Calu3 (cell line): ENCODE measurements at regions of chr18 and their contacts with region 1.

Region 1: DNA sequence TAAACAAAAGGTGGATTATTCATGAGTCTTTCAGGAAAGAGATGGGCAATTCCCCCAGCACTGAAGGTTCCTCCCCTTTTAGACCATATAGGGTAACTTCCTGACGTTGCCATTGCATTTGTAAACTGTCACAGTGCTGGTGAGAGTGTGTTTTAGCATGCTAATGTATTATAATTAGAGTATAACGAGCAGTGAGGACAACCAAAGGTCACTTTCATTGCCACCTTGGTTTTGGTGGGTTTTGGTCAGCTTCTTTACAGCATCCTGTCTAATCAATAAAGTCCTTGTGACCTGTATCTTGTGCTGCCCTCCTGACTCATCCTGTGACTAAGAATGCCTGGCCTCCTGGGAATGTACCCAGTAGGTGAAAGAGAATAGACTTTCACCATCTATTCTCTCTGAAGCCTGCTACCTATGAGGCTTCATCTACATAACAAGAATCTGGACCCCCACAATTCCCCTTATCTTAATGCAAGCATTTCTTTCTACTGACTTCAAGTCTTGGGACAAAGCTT is 148.7 kb downstream of the CABLES1 start:
- DNase-seq: peak; percentile 73
- H3K4me3 Mint-ChIP-seq: peak overlapping the region; percentile 3
- H3K27ac Mint-ChIP-seq: peak overlapping the region; percentile 89
- H3K4me1 Mint-ChIP-seq: peaks cover 71% of the 10 kb centered on the region
- H3K27me3 Mint-ChIP-seq: no peaks in the 10 kb centered on the region
- CTCF ChIP-seq: no peak

Region 2: DNA sequence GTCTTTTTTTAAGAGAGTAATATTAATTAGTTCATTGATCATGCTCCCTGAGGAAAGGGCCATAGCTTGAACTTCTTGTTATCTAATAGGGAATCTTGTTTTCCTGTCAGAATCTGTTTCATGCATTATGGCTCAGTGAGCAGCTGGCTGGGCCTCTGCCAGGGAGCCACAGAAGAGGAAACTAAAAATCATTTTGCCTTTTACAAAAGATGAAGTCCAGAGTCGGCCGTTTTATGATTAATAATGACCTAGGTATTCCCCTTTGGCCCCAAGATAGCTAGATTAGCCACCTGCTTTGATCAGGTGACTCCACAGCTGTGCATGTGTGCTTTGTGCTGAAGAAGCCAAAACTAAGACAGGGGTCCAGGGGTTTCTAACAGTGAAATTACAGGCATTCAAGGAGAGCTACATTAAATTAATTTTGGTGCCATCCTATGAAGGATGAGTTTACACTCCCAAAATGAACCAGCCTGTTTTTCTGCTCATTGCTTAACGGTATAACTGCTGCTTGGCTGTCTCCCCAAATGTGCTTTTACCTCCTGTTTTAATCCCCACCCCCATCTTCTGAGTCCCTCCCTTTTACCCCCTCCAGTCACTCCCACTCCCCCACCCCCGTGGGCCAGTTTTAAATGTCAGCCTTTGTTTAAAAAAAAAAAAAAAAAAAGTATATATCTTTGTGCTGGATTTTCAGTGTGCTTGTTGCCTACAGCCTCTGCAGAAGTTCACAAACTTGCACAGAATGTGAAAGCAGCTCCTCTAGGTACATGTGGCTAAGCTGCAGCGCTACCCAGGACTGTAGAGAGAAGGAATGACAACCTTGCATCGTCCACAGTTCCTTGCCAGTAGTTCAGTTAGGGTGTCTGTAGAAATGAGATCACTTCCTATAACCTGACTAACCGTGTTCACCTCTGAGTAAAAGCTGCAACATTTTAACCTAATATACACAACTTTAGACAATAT is 55.6 kb before region 1 on chr18:
- CTCF ChIA-PET with region 1: interaction called, 5 read pairs
- intact Hi-C with region 1: loop called (anchors 10 kb)
- DNase-seq: no peak
- H3K4me3 Mint-ChIP-seq: peak overlapping the region; percentile 22
- H3K27ac Mint-ChIP-seq: peak overlapping the region; percentile 86
- H3K4me1 Mint-ChIP-seq: peaks cover 65% of the 10 kb centered on the region
- H3K27me3 Mint-ChIP-seq: no peaks in the 10 kb centered on the region
- CTCF ChIP-seq: no peak

Region 3: GRCh38 chr18:23307567-23308295 is 23.8 kb after region 1 on chr18:
- CTCF ChIA-PET with region 1: no interaction called
- intact Hi-C with region 1: no loop called
- DNase-seq: no peak
- H3K4me3 Mint-ChIP-seq: no peak overlapping the region
- H3K27ac Mint-ChIP-seq: no peak overlapping the region
- H3K4me1 Mint-ChIP-seq: peaks cover 17% of the 10 kb centered on the region
- H3K27me3 Mint-ChIP-seq: no peaks in the 10 kb centered on the region
- CTCF ChIP-seq: no peak

Region 4: DNA sequence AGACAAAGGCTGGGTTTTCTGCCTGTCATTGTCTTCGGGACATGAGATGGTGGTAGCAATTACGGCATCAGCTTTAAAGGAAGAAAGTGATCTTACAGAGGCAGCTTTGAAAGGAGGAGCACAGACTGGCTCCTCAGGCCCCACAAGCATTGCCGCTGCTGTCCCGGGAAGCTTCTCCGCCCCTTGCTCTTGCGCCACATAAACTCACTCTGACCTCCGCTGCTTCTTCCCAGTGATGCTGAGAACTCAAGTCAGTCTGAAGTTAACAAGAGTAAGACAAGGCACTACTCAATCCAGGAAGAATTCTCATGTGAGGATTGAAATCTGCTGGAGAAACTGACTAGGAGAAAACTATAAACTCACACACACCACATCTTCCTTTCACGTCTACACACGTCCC is 56.7 kb after region 1 on chr18:
- CTCF ChIA-PET with region 1: no interaction called
- intact Hi-C with region 1: no loop called
- DNase-seq: no peak
- H3K4me3 Mint-ChIP-seq: no peak overlapping the region
- H3K27ac Mint-ChIP-seq: no peak overlapping the region
- H3K4me1 Mint-ChIP-seq: no peaks in the 10 kb centered on the region
- H3K27me3 Mint-ChIP-seq: no peaks in the 10 kb centered on the region
- CTCF ChIP-seq: no peak

Region 5: GRCh38 chr18:23391156-23391555 is 107.2 kb after region 1 on chr18:
- CTCF ChIA-PET with region 1: no interaction called
- intact Hi-C with region 1: no loop called
- DNase-seq: no peak
- H3K4me3 Mint-ChIP-seq: no peak overlapping the region
- H3K27ac Mint-ChIP-seq: no peak overlapping the region
- H3K4me1 Mint-ChIP-seq: peaks cover 7% of the 10 kb centered on the region
- H3K27me3 Mint-ChIP-seq: no peaks in the 10 kb centered on the region
- CTCF ChIP-seq: no peak